ENCODE measurements at regions of chr15 and their contacts with region 1.

Region 1: GRCh38 chr15:48244921-48245320 is 38.8 kb downstream of the SLC12A1 start:
- DNase-seq: no peak
- H3K4me3 ChIP-seq: no peak overlapping the region
- H3K27ac ChIP-seq: no peak overlapping the region
- H3K4me1 ChIP-seq: no peaks in the 10 kb centered on the region
- CTCF ChIP-seq: no peak

Region 2: DNA sequence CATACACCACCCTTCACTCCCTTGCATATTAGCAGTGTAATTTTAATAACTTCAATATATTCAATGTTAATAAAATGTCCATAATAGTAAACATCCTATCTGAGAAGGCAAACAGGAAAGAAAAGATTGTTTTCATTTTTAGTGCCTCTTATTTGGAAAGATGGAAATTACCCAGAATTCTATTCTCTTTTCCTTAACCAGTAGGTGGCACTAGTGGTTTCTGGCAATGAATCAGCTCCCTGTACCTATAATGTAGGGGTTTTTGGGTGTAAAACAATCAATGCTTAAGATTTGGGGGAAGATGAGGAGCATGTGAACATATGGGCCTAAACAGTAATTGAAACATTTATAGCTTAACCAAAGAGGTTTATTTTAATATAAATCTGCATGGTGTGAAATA is 533.3 kb before region 1 on chr15:
- CTCF ChIA-PET with region 1: no interaction called
- POLR2A ChIA-PET with region 1: no interaction called
- intact Hi-C with region 1: loop called (anchors 5 kb)
- DNase-seq: peak; percentile 23
- H3K4me3 ChIP-seq: no peak overlapping the region
- H3K27ac ChIP-seq: no peak overlapping the region
- H3K4me1 ChIP-seq: no peaks in the 10 kb centered on the region
- CTCF ChIP-seq: peak; percentile 81

Region 3: DNA sequence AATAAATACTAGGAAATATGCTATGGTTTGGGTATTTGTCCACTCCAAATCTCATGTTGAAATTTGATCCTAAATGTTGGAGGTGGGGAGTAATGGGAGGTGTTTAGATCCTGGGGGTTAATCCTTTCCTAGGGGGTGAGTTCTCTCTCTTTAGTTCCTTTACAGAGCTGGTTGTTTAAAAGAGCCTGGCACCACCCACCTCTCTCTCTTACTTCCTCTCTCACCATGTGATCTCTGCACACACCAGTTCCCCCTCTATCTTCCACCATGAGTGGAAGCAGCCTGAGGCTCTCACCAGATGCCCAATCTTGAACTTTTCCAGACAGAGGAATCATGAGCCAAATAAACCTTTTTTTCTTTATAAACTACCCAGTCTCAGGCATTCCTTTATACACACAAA is 113.6 kb before region 1 on chr15:
- CTCF ChIA-PET with region 1: no interaction called
- POLR2A ChIA-PET with region 1: no interaction called
- intact Hi-C with region 1: loop called (anchors 10 kb)
- DNase-seq: no peak
- H3K4me3 ChIP-seq: no peak overlapping the region
- H3K27ac ChIP-seq: no peak overlapping the region
- H3K4me1 ChIP-seq: no peaks in the 10 kb centered on the region
- CTCF ChIP-seq: no peak

Measured in OCI-LY7 (cell line).